B cell (primary cell): ENCODE measurements at regions of chr20 and their contacts with region 1.

Region 1: DNA sequence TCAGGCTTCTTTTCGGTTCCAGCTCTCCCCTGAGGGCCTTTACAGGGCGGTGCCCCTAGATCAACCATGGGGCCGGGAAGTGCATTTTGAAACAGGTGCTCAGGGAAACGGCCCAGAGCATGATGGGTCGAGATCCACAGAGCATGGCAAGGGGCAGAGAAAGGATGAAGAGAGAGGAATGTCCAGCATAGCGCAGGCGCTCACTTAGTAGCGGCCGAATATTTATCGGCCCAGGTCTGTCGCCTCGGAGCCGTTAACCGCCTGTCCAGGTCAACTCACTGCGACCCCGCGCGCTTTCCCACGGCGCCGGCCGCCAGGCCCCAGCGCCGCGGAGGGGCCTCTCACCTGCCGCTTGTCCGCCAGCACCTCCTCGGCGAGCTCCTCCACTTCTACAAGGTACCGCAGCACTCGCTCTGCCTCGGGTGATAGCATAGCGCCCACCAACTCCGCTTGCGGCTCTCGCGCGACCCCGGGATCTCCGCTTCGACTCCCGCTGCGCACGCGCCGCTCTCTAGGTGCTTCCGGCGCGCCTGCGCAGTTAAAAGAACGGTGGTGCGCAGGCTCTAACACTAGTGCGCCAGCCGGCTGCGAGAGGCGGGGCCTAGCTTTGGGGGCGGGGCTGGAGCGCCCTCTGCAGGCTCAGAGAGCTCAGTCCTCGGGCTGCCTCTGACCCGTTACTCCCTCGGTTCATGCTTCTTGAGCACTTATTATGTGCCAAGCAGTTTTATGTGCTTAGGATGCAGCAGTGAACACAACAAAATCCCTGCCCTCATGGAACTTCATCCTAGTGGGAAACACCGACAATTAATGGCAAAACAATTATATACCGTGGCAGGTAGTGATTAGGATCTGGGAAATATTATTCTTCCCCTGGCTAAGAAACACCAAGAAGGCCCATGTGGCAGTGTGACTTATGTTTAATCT is at the start of gene PDRG1:
- DNase-seq: peak; percentile 97
- ATAC-seq: peak; percentile 98
- H3K4me3 ChIP-seq: peak within 1 kb of the TSS; percentile 65 to 91 (median 86)
- H3K4me3 Mint-ChIP-seq: peak within 1 kb of the TSS; percentile 99
- H3K27ac ChIP-seq: peak within 1 kb of the TSS; percentile 56 to 88
- H3K27ac Mint-ChIP-seq: peak within 1 kb of the TSS; percentile 98
- H3K4me1 ChIP-seq: peaks cover 14 to 18% of the 10 kb centered on the region in 2 donors
- H3K4me1 Mint-ChIP-seq: peaks cover 28% of the 10 kb centered on the region
- H3K27me3 ChIP-seq: no peaks in the 10 kb centered on the region
- H3K27me3 Mint-ChIP-seq: peaks cover 18% of the 10 kb centered on the region
- CTCF ChIP-seq: peak; percentile 83
- total RNA-seq, gene PDRG1: 10.9 and 12.7 TPM in 2 replicates

Region 2: DNA sequence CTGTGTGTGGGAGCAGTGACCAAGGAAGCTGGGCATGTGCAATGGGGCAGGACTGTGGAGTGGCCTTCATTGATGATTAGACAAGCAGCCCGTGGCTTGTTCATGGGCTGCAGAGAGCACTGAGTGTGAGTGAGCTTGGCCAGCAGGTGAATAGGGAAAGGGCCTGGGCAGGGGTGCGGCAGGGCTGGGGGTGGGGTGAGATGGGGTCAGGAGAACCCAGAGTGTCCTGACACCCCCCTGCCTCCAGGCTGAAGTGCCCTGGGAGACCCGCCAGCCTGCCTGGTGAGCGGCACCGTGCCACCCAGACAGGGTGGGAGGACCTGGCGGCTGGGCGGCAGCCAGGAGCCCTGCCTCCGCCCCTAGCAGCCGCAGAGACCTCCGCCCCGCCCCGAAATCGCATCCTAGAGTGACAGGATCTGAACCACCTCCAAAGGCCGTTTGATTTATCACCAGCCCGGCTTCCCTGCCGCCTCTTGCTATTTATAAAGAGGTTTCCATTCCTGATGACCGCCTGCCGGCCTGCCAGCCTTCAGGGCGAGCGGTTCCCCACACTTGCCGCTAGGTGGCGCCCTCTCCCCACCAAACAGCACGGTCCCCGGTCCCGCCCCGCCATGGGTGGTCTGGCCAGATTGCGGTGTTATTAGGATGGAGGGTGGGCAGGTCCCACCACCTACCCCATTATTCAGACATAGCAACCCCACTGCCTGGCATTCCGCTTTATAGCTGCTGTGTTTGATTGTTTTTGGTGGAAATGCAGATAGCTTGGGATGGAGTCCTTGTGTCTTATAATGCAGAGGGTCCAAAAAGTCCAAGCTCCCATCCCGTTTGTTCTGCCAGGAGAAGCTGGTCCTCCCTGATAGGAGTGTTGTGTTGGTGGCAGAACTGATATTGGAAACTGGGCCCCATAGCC is 129.1 kb before region 1 on chr20:
- CTCF ChIA-PET with region 1: interaction called, 33 read pairs
- POLR2A ChIA-PET with region 1: no interaction called
- intact Hi-C with region 1: loop called (anchors 1 kb)
- DNase-seq: peak; percentile 82
- ATAC-seq: peak; percentile 93
- H3K4me3 ChIP-seq: no peak overlapping the region
- H3K4me3 Mint-ChIP-seq: peak overlapping the region; percentile 27
- H3K27ac ChIP-seq: no peak overlapping the region
- H3K27ac Mint-ChIP-seq: no peak overlapping the region
- H3K4me1 ChIP-seq: peaks cover 6 to 8% of the 10 kb centered on the region in 2 donors
- H3K4me1 Mint-ChIP-seq: peaks cover 8% of the 10 kb centered on the region
- H3K27me3 ChIP-seq: peaks cover 0 to 9% (median 0%) of the 10 kb centered on the region in 4 experiments
- H3K27me3 Mint-ChIP-seq: peaks cover 8% of the 10 kb centered on the region
- CTCF ChIP-seq: peak; percentile 99

Region 3: DNA sequence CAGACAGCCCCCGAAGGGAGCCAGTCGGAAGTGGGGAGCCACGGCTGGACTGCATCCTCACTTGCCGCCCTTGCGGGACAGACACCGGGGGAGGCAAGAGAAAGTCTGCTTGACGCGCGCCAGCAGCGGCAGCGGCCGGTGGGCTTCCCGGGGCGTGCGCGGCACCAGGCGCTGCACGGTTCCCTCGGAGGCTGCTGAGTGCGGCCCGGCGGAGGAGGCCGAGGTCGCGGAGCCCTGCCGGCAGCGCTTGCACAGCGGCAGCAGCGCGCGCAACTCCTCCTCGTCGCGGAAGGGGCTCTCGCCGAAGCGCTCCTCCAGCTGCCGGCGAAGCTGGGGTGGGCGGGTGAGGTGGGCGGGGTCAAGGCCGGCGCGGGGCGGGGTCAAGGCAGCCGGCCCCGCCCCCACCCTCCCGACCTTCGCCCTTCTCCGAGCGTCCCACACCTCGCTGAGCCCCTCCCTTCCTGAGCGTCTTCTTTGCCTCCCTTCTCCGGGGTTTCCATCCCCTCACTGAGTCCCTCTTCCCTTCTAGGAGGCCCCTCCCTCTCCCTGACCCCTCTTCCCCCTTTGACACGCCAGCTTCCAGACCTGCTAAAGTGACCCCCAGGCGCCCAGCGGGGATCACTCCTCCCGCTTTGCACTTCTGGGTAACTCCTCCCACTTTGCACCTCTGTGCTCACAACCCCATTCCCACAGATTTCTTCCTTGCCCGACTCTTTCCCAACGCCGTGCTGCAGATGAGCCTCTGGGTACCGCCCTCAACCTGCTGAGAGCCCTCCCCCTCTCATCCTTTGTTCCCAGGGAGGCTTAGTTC is 90.2 kb before region 1 on chr20:
- CTCF ChIA-PET with region 1: interaction called, 187 read pairs
- POLR2A ChIA-PET with region 1: no interaction called
- intact Hi-C with region 1: no loop called
- DNase-seq: peak; percentile 81
- ATAC-seq: peak; percentile 83
- H3K4me3 ChIP-seq: peak overlapping the region in 4 of 5 experiments; percentile 42 to 61 (median 54)
- H3K4me3 Mint-ChIP-seq: peak overlapping the region; percentile 75
- H3K27ac ChIP-seq: no peak overlapping the region
- H3K27ac Mint-ChIP-seq: peak overlapping the region; percentile 53
- H3K4me1 ChIP-seq: peaks cover 19 to 26% of the 10 kb centered on the region in 2 donors
- H3K4me1 Mint-ChIP-seq: peaks cover 29% of the 10 kb centered on the region
- H3K27me3 ChIP-seq: peaks cover 0 to 18% (median 10%) of the 10 kb centered on the region in 4 experiments
- H3K27me3 Mint-ChIP-seq: peaks cover 5% of the 10 kb centered on the region
- CTCF ChIP-seq: no peak

Region 4: DNA sequence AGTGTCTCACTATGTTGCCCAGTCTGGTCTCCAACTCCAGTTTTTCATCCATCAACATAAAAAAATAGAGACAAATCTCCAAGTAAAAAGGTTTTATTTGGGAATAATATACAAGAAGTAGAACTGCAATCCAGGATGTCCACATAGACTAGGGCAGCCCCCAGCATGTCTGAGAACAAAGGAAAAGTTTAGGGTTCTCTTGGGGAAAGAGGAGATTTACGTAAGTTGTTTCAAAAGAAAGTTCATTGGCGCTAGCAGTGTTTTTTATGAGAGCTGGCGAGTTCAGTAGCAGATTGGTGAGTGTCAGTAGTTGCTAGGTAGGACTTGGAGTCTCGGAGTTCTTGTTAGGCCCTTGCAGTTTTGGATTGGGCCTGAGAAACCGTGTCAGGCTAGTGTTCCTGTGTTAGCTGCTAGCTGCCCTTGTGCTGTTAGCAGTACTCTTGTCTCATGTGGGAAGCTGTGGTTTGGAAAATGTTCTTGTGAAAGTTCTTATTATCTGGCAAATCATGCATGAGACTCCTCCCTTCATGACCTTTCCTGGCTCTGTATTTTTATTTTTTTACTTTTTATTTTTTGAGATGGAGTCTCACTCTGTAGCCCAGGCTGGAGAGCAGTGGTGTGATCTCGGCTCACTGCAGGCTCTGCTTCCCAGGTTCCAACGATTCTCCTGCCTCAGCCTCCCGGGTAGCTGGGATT is 56.7 kb before region 1 on chr20:
- CTCF ChIA-PET with region 1: interaction called, 3 read pairs
- POLR2A ChIA-PET with region 1: no interaction called
- intact Hi-C with region 1: loop called (anchors 1 kb)
- DNase-seq: peak; percentile 89
- ATAC-seq: peak; percentile 100
- H3K4me3 ChIP-seq: peak overlapping the region in 1 of 5 experiments; percentile 40
- H3K4me3 Mint-ChIP-seq: peak overlapping the region; percentile 28
- H3K27ac ChIP-seq: peak overlapping the region; percentile 94
- H3K27ac Mint-ChIP-seq: peak overlapping the region; percentile 79
- H3K4me1 ChIP-seq: peaks cover 10 to 15% of the 10 kb centered on the region in 2 donors
- H3K4me1 Mint-ChIP-seq: peaks cover 15% of the 10 kb centered on the region
- H3K27me3 ChIP-seq: no peaks in the 10 kb centered on the region
- H3K27me3 Mint-ChIP-seq: no peaks in the 10 kb centered on the region
- CTCF ChIP-seq: no peak

Region 5: DNA sequence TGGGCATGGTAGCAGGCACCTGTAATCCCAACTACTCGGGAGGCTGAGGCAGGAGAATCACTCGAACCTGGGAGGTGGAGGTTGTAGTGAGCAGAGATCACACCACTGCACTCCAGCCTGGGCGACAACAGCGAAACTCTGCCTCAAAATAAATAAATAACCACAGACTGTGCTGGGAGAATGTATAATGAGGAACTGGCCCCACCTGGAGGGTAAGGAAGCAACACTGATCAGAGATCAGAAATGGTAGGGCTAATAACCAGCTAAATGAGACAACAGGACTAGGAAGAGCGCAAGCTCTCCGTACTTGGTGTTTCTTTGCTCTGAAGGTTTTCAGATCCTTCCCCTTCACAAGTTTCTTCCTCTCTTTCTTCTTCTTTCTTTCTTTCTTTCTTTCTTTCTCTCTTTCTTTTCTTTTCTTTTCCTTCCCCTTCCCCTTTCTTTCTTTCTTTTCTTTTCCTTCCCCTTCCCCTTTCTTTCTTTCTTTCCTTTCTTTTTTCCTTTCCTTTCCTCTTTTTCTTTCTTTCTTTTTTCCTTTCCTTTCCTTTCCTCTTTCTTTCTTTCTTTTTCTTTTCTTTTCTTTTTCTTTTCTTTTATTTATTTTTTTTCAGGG is 73.0 kb after region 1 on chr20:
- CTCF ChIA-PET with region 1: interaction called, 11 read pairs
- POLR2A ChIA-PET with region 1: no interaction called
- intact Hi-C with region 1: loop called (anchors 2 kb)
- DNase-seq: peak; percentile 44
- ATAC-seq: peak; percentile 41
- H3K4me3 ChIP-seq: no peak overlapping the region
- H3K4me3 Mint-ChIP-seq: no peak overlapping the region
- H3K27ac ChIP-seq: no peak overlapping the region
- H3K27ac Mint-ChIP-seq: no peak overlapping the region
- H3K4me1 ChIP-seq: peaks cover 2 to 5% of the 10 kb centered on the region in 2 donors
- H3K4me1 Mint-ChIP-seq: peaks cover 10% of the 10 kb centered on the region
- H3K27me3 ChIP-seq: peaks cover 0 to 47% (median 16%) of the 10 kb centered on the region in 4 experiments
- H3K27me3 Mint-ChIP-seq: peaks cover 44% of the 10 kb centered on the region
- CTCF ChIP-seq: peak; percentile 27

Region 6: DNA sequence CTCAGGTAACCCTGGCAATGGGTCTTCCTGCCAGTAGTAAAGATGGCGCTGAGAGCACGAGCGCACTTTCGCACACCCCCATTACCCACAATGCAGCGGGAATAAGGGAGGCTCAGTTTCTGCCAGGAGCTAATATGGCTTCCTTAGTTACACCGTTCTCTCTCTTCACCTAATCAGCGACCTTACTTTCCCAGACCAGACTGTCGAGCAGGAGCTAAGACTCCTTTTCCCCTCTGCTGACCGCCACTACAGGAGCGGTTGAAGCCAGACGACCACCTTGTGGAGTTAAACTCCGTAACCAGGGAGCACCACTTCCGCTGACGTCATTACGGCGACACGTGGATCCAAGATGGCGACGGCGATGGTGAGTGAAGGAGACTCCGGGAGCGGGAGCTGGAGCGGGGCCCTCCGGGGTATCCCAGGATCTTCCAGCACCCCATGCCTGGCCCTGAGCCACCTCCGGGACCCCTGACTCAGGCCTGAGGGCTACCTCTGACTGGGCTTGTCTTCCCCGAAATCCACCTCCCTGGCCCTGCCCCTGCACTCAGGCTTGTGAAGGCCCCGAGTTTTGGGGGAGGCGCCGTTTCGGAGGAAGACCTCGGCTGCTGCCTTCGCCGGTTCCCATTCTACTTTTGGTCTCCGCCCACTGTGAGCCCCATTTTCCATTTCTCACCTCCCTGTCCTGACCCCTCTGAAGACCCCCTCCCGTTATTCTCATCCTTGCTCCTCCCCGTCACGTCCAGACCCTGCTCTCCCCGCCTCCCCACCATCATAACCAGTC is 157.8 kb after region 1 on chr20 and contains the start of gene TM9SF4:
- CTCF ChIA-PET with region 1: no interaction called
- POLR2A ChIA-PET with region 1: no interaction called
- intact Hi-C with region 1: loop called (anchors 1 kb)
- DNase-seq: peak; percentile 97
- ATAC-seq: peak; percentile 90
- H3K4me3 ChIP-seq: peak within 1 kb of the TSS; percentile 87 to 96 (median 95)
- H3K4me3 Mint-ChIP-seq: peak within 1 kb of the TSS; percentile 99
- H3K27ac ChIP-seq: peak within 1 kb of the TSS; percentile 99
- H3K27ac Mint-ChIP-seq: peak within 1 kb of the TSS; percentile 99
- H3K4me1 ChIP-seq: peaks cover 8 to 9% of the 10 kb centered on the region in 2 donors
- H3K4me1 Mint-ChIP-seq: peaks cover 36% of the 10 kb centered on the region
- H3K27me3 ChIP-seq: no peaks in the 10 kb centered on the region
- H3K27me3 Mint-ChIP-seq: no peaks in the 10 kb centered on the region
- CTCF ChIP-seq: no peak
- total RNA-seq, gene TM9SF4: 50.4 and 53.8 TPM in 2 replicates